ENCODE measurements at regions of chr6 and their contacts with region 1.

Region 1: GRCh38 chr6:149717588-149718458 is at the start of gene LATS1:
- DNase-seq: peak; percentile 95
- H3K4me3 Mint-ChIP-seq: peak within 1 kb of the TSS; percentile 84
- H3K27ac Mint-ChIP-seq: peak within 1 kb of the TSS; percentile 94
- H3K4me1 Mint-ChIP-seq: peaks cover 25% of the 10 kb centered on the region
- H3K27me3 Mint-ChIP-seq: no peaks in the 10 kb centered on the region
- total RNA-seq, gene LATS1: 18.1 to 19.6 TPM

Region 2: GRCh38 chr6:149112976-149113375 is 604.8 kb before region 1 on chr6:
- CTCF ChIA-PET with region 1: no interaction called
- intact Hi-C with region 1: no loop called
- DNase-seq: peak; percentile 43
- H3K4me3 Mint-ChIP-seq: no peak overlapping the region
- H3K27ac Mint-ChIP-seq: peak overlapping the region; percentile 54
- H3K4me1 Mint-ChIP-seq: peaks cover 41% of the 10 kb centered on the region
- H3K27me3 Mint-ChIP-seq: no peaks in the 10 kb centered on the region

Region 3: GRCh38 chr6:149565527-149566409 is 152.1 kb before region 1 on chr6 and contains the start of gene GINM1:
- CTCF ChIA-PET with region 1: no interaction called
- intact Hi-C with region 1: loop called (anchors 1 kb)
- DNase-seq: peak; percentile 97
- H3K4me3 Mint-ChIP-seq: peak within 1 kb of the TSS; percentile 92
- H3K27ac Mint-ChIP-seq: peak within 1 kb of the TSS; percentile 89
- H3K4me1 Mint-ChIP-seq: peaks cover 26% of the 10 kb centered on the region
- H3K27me3 Mint-ChIP-seq: no peaks in the 10 kb centered on the region
- total RNA-seq, gene GINM1: 17.6 to 18.4 TPM

Measured in activated naive CD4-positive, alpha-beta T cell treated with anti-CD3 and anti-CD28 coated beads for 36 hours (primary cell).